Aorta (tissue), 5 donors: ENCODE measurements at regions of chr4 and their contacts with region 1.

Region 1: GRCh38 chr4:114386637-114387233 is 211.9 kb upstream of the UGT8 start:
- DNase-seq: no peak
- ATAC-seq: no peak
- H3K4me3 ChIP-seq: no peak overlapping the region
- H3K27ac ChIP-seq: no peak overlapping the region
- H3K4me1 ChIP-seq: no peaks in the 10 kb centered on the region
- H3K27me3 ChIP-seq: no peaks in the 10 kb centered on the region

Region 2: DNA sequence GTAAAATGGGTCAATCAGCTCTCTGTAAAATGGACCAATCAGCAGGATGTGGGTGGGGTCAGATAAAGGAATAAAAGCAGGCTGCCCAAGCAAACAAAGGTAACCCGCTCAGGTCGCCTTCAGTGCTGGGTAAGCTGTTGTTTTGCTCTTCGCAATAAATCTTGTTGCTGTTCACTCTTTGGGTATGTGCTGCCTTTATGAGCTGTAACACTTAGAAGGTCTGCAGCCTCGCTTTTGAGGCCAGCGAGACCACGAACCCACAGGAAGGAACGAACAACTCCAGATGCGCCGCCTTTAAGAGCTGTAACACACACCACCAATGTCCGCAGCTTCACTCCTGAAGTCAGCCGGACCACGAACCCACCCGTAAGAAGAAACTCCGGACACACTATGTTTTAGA is 613.7 kb before region 1 on chr4:
- intact Hi-C with region 1: loop called in 1 of 2 experiments (anchors 5 kb)
- DNase-seq: no peak
- ATAC-seq: no peak
- H3K4me3 ChIP-seq: no peak overlapping the region
- H3K27ac ChIP-seq: no peak overlapping the region
- H3K4me1 ChIP-seq: no peaks in the 10 kb centered on the region
- H3K27me3 ChIP-seq: no peaks in the 10 kb centered on the region

Region 3: DNA sequence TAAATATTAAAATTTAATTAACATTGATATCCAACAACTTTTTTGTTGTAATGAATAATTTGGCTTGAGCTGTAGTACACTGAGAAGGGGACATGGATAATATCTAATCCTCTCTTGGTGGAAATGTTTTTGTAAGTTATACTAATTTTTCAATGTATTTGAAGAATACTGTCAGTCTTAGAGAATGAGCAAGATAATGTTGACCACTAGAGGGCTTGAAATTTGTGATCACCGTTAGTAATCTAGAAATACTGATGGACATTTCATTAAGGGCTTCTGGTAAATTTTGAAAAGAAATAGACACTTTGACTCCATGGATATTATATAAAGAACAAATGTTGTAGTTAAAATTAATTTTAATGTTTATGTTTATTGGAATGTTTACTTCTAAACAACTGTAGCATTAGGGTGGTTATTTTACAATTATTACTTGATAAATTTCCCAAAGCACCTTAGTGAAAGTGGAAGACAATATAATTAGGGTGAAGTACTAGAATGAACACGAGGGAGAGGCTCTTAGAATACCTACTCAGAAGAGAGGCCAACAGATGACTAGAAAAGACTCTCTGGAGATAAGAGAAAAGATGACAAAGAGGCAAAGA is 605.2 kb before region 1 on chr4:
- intact Hi-C with region 1: loop called (anchors 5 kb)
- DNase-seq: no peak
- ATAC-seq: no peak
- H3K4me3 ChIP-seq: no peak overlapping the region
- H3K27ac ChIP-seq: no peak overlapping the region
- H3K4me1 ChIP-seq: no peaks in the 10 kb centered on the region
- H3K27me3 ChIP-seq: no peaks in the 10 kb centered on the region

Region 4: GRCh38 chr4:113952452-113953029 is 434.2 kb before region 1 on chr4:
- intact Hi-C with region 1: loop called in 1 of 2 experiments (anchors 10 kb)
- DNase-seq: no peak
- ATAC-seq: peak; percentile 78
- H3K4me3 ChIP-seq: no peak overlapping the region
- H3K27ac ChIP-seq: no peak overlapping the region
- H3K4me1 ChIP-seq: no peaks in the 10 kb centered on the region
- H3K27me3 ChIP-seq: no peaks in the 10 kb centered on the region

Region 5: DNA sequence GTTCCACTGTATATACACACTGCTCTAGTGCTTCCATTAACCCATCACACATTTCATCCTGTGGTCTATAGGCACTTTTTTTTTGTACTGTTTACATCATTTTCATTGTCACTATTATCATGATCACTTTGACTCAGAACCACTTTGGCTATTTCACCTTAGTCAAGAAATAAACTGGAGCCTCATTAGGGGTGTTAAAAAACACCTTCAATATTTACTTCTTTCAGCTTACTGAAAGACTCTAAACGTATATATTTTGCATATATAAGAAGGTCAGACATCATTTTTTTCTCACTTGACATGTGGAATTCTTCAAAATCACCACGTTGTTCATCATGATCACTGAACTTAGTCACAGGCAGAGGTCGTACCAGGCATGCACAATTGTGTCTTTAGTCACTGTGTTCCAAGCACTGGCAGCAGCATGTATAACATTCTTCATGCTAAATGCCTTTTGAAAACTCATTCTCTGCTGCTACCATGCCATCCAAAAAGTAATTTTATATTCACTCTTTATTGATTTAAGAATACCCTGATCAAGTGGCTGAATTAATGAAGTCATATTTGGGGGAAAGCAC is 178.1 kb before region 1 on chr4:
- intact Hi-C with region 1: loop called in 1 of 2 experiments (anchors 5 kb)
- DNase-seq: no peak
- ATAC-seq: no peak
- H3K4me3 ChIP-seq: no peak overlapping the region
- H3K27ac ChIP-seq: no peak overlapping the region
- H3K4me1 ChIP-seq: no peaks in the 10 kb centered on the region
- H3K27me3 ChIP-seq: no peaks in the 10 kb centered on the region

Region 6: GRCh38 chr4:114334884-114335330 is 51.8 kb before region 1 on chr4:
- intact Hi-C with region 1: no loop called
- DNase-seq: no peak
- ATAC-seq: no peak
- H3K4me3 ChIP-seq: no peak overlapping the region
- H3K27ac ChIP-seq: no peak overlapping the region
- H3K4me1 ChIP-seq: no peaks in the 10 kb centered on the region
- H3K27me3 ChIP-seq: no peaks in the 10 kb centered on the region

Region 7: GRCh38 chr4:114558446-114559020 is 171.8 kb after region 1 on chr4:
- intact Hi-C with region 1: no loop called
- DNase-seq: no peak
- ATAC-seq: no peak
- H3K4me3 ChIP-seq: no peak overlapping the region
- H3K27ac ChIP-seq: no peak overlapping the region
- H3K4me1 ChIP-seq: no peaks in the 10 kb centered on the region
- H3K27me3 ChIP-seq: no peaks in the 10 kb centered on the region

Region 8: DNA sequence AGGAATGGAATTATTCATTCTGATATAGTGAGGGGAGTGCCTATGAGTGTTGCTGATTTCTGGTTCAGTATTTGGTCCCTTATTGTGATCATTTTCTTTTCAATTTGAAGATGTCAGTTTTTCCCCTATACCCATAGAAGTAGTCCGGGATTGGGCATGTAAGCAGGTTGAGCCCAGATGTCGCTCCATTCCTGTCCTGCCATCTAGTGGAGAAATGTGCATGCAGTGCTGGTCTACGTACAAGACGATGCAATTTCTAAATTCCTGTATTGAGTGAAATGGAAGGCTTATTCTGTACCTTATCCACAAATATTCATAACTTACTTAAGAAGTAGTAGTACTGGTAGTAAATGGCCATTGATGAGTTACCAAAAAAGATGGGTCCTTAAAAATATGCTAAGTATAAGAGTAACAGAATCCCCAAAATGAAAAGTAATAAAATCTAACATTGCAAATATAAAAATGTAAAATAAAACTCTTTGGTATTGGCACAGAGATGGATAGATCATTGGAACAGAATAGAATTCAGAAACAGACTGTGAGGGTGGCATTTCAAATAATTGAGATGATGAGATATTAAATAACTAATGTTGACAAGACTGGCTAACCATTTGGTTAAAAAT is 272.8 kb after region 1 on chr4:
- intact Hi-C with region 1: loop called (anchors 10 kb)
- DNase-seq: peak in 1 of 2 donors; percentile 43
- ATAC-seq: no peak
- H3K4me3 ChIP-seq: no peak overlapping the region
- H3K27ac ChIP-seq: no peak overlapping the region
- H3K4me1 ChIP-seq: no peaks in the 10 kb centered on the region
- H3K27me3 ChIP-seq: no peaks in the 10 kb centered on the region

Region 9: GRCh38 chr4:114694770-114695169 is 308.0 kb after region 1 on chr4:
- intact Hi-C with region 1: loop called (anchors 2 to 10 kb)
- DNase-seq: no peak
- ATAC-seq: no peak
- H3K4me3 ChIP-seq: no peak overlapping the region
- H3K27ac ChIP-seq: no peak overlapping the region
- H3K4me1 ChIP-seq: no peaks in the 10 kb centered on the region
- H3K27me3 ChIP-seq: no peaks in the 10 kb centered on the region